Heart left ventricle (tissue), 16 donors: ENCODE measurements at regions of chr10 and their contacts with region 1.

Region 1: DNA sequence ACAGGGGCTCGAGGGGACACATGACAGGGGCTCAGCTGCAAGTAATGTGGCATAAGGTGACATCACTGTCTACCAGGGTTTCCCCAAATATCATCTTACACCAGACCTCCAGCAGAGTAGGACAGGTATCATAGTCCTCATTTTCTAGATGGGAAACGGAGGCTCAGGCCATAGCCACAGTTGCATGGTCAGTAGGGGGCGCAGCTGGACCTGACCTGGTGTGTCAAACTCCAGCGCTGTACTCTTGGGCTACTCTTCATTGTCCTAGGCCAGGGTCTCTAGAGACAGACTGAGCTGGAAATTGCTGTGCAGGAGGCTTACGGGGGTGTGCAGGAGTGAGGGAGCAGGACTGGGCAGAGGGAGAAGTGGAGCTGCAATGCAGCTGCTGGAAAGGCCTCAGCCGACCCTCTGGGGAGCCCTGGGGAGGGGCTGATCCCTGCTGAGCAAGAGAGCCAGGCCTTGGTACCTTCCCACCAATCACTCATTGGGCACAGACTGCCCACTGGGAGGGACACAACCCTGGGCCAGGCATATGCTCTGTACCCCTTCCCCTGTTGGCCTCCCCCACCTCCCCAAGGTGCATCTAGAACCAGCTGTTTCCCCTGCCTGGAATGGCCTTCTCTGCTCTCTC is 89.9 kb downstream of the CDH23 start:
- DNase-seq: peak in 4 of 5 donors; percentile 28 to 57 (median 46)
- ATAC-seq: peak in 3 of 4 donors; percentile 46 to 67 (median 49)
- H3K4me3 ChIP-seq: no peak overlapping the region
- H3K27ac ChIP-seq: no peak overlapping the region
- H3K4me1 ChIP-seq: peaks cover 0 to 13% (median 0%) of the 10 kb centered on the region in 12 donors
- H3K27me3 ChIP-seq: no peaks in the 10 kb centered on the region
- CTCF ChIP-seq: peak; percentile 31 to 63 (median 49)
- POLR2A ChIP-seq: no peak

Region 2: DNA sequence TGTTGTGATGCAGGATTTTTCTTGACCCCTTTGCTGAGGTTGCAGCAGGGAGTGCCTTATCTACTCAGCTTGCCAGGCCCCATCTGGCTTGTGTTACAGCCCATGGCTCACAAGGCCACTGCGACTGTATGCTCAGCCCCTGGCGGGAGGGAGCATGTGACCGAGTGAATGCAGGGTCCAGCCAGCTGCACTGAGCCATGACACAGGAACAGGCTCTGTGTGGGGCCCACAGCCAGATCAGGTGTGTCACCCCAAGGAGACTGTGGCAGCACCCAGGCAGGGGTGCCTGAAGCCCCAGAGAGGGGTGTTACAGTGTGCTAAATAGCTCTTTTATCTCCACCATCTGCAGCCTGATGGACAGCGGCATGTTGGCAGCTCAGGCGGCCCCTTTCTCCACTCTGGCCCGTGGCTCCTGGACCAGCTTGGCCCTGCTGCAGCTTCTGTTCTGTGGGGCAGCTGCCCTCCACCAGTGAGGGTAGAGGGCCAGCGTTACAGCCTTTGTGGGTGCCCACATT is 595.6 kb before region 1 on chr10:
- intact Hi-C with region 1: loop called in 1 of 10 experiments (anchors 10 kb)
- DNase-seq: peak in 4 of 5 donors; percentile 68 to 90 (median 77)
- ATAC-seq: peak; percentile 51 to 85 (median 75)
- H3K4me3 ChIP-seq: no peak overlapping the region
- H3K27ac ChIP-seq: peak overlapping the region in 9 of 12 donors; percentile 2 to 82 (median 57)
- H3K4me1 ChIP-seq: peaks cover 0 to 46% (median 21%) of the 10 kb centered on the region in 12 donors
- H3K27me3 ChIP-seq: no peaks in the 10 kb centered on the region
- CTCF ChIP-seq: no peak
- POLR2A ChIP-seq: no peak

Region 3: GRCh38 chr10:71608819-71609768 is 122.5 kb after region 1 on chr10:
- intact Hi-C with region 1: loop called in 1 of 10 experiments (anchors 5 kb)
- DNase-seq: peak; percentile 72 to 87 (median 81)
- ATAC-seq: peak in 3 of 4 donors; percentile 22 to 68 (median 58)
- H3K4me3 ChIP-seq: no peak overlapping the region
- H3K27ac ChIP-seq: no peak overlapping the region
- H3K4me1 ChIP-seq: peaks cover 3 to 22% (median 17%) of the 10 kb centered on the region in 12 donors
- H3K27me3 ChIP-seq: no peaks in the 10 kb centered on the region
- CTCF ChIP-seq: peak; percentile 60 to 86 (median 82)
- POLR2A ChIP-seq: no peak

Region 4: GRCh38 chr10:71694567-71694968 is 208.0 kb after region 1 on chr10:
- intact Hi-C with region 1: no loop called
- DNase-seq: peak in 4 of 5 donors; percentile 60 to 66 (median 64)
- ATAC-seq: peak; percentile 39 to 69 (median 65)
- H3K4me3 ChIP-seq: peak overlapping the region in 1 of 12 donors; percentile 29
- H3K27ac ChIP-seq: peak overlapping the region in 11 of 12 donors; percentile 24 to 93 (median 83)
- H3K4me1 ChIP-seq: peaks cover 0 to 57% (median 34%) of the 10 kb centered on the region in 12 donors
- H3K27me3 ChIP-seq: no peaks in the 10 kb centered on the region
- CTCF ChIP-seq: no peak
- POLR2A ChIP-seq: no peak